ENCODE measurements at regions of chr17 and their contacts with region 1.

Region 1: GRCh38 chr17:73645050-73645978 is 1.1 kb upstream of the SDK2 start:
- DNase-seq: no peak
- H3K4me3 ChIP-seq: peak overlapping the region; percentile 61 to 76
- H3K27ac ChIP-seq: peak overlapping the region in 1 of 2 donors; percentile 66
- H3K4me1 ChIP-seq: peaks cover 6 to 18% of the 10 kb centered on the region in 2 donors
- H3K27me3 ChIP-seq: no peaks in the 10 kb centered on the region
- CTCF ChIP-seq: peak in 1 of 3 experiments; percentile 6

Region 2: GRCh38 chr17:73092523-73093135 is 552.7 kb before region 1 on chr17 and contains the start of gene SLC39A11:
- intact Hi-C with region 1: loop called (anchors 5 kb)
- DNase-seq: peak; percentile 80 to 95
- H3K4me3 ChIP-seq: peak within 1 kb of the TSS; percentile 77 to 86
- H3K27ac ChIP-seq: peak within 1 kb of the TSS; percentile 66 to 74
- H3K4me1 ChIP-seq: peaks cover 3 to 24% of the 10 kb centered on the region in 2 donors
- H3K27me3 ChIP-seq: no peaks in the 10 kb centered on the region
- CTCF ChIP-seq: no peak
- total RNA-seq, gene SLC39A11: 4.9 TPM

Region 3: DNA sequence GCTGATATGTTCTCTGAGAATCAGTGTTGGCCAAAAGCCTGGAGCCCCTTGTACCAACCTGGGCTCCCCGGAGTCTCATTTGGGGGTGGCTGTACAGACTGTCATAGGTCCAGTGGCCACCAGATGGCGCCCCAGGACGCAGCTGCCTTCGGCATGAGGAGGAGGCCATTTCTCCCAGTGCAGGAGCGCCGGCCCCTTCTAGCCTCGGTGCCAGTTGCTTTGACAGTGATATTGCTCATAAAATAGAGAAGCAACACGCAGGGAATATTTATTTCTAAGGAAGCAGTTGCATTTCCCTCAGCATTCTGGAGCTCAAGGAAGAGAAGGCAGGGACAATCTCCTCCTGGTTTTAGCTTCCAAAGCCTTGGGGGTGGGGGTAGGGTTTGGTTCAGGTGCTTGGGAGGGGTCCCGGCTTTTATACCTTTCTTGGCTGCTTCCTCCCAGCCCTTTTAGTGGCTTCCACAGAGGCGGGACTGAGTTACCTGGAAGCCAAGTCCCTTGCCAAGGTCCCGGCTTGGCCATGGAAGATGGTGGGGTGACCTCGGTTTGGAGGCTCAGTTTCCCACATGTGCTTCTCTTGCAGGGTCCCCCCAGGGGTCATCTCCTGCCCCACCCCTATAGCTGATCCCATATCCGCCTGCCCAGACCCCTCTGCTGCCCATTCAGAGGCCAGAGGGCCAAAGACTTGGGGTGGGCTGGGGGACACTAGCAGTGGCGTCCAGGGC is 215.7 kb before region 1 on chr17:
- intact Hi-C with region 1: loop called (anchors 5 kb)
- DNase-seq: peak; percentile 26 to 87
- H3K4me3 ChIP-seq: no peak overlapping the region
- H3K27ac ChIP-seq: no peak overlapping the region
- H3K4me1 ChIP-seq: no peaks in the 10 kb centered on the region
- H3K27me3 ChIP-seq: no peaks in the 10 kb centered on the region
- CTCF ChIP-seq: peak; percentile 81 to 98 (median 95)

Region 4: GRCh38 chr17:73690676-73691075 is 45.4 kb after region 1 on chr17:
- intact Hi-C with region 1: no loop called
- DNase-seq: no peak
- H3K4me3 ChIP-seq: no peak overlapping the region
- H3K27ac ChIP-seq: no peak overlapping the region
- H3K4me1 ChIP-seq: no peaks in the 10 kb centered on the region
- H3K27me3 ChIP-seq: no peaks in the 10 kb centered on the region
- CTCF ChIP-seq: no peak

Region 5: GRCh38 chr17:73710095-73710592 is 64.8 kb after region 1 on chr17:
- intact Hi-C with region 1: loop called (anchors 5 kb)
- DNase-seq: peak in 1 of 2 donors; percentile 77
- H3K4me3 ChIP-seq: no peak overlapping the region
- H3K27ac ChIP-seq: no peak overlapping the region
- H3K4me1 ChIP-seq: peaks cover 0 to 2% of the 10 kb centered on the region in 2 donors
- H3K27me3 ChIP-seq: no peaks in the 10 kb centered on the region
- CTCF ChIP-seq: peak; percentile 72 to 82 (median 78)

Region 6: GRCh38 chr17:73770115-73770848 is 125.0 kb after region 1 on chr17:
- intact Hi-C with region 1: loop called (anchors 2 kb)
- DNase-seq: peak; percentile 53 to 92
- H3K4me3 ChIP-seq: peak overlapping the region in 1 of 2 donors; percentile 3
- H3K27ac ChIP-seq: peak overlapping the region; percentile 53 to 54
- H3K4me1 ChIP-seq: peaks cover 13 to 27% of the 10 kb centered on the region in 2 donors
- H3K27me3 ChIP-seq: no peaks in the 10 kb centered on the region
- CTCF ChIP-seq: no peak

Region 7: GRCh38 chr17:74203439-74204240 is 558.3 kb after region 1 on chr17 and contains the start of gene RPL38:
- intact Hi-C with region 1: loop called (anchors 5 kb)
- DNase-seq: peak; percentile 74 to 97
- H3K4me3 ChIP-seq: peak within 1 kb of the TSS; percentile 68 to 93
- H3K27ac ChIP-seq: peak within 1 kb of the TSS; percentile 76
- H3K4me1 ChIP-seq: peaks cover 9 to 15% of the 10 kb centered on the region in 2 donors
- H3K27me3 ChIP-seq: peaks cover 4% of the 10 kb centered on the region
- CTCF ChIP-seq: peak; percentile 88 to 96 (median 93)
- total RNA-seq, gene RPL38: 243 TPM

Region 8: DNA sequence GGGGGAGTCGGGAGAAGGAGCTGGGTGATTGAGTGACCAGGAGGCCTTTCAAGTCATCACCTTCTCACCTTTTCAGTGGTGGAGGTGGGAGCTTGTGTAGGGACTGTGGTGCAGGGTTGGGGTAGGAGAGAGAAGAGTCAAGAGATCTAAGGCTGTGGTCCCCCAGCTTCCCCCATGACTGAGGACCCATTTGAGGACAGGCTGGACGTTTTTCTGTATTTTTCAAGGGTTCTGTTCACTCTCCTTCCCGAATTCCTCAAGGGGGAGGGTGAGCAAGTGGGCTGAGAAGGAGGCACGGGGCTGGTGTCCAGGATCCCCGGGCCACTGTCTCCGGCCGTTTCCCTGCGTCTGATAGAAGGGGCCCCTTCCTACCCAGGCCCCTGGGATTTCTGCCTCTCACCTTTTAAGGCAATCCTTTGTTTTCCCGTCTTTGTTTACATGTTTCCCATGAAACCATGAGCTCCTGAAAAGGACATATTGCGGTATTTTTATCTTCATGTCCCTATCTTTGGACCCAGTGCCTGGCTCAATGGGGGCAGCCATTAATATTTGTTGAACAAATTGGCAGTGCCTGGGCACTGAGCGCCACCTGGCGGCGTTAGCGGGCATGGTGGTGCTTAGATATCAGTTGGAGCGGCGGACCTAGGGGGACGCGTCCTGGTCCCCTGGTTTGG is 812.0 kb after region 1 on chr17:
- intact Hi-C with region 1: loop called (anchors 10 kb)
- DNase-seq: peak in 1 of 2 donors; percentile 90
- H3K4me3 ChIP-seq: no peak overlapping the region
- H3K27ac ChIP-seq: no peak overlapping the region
- H3K4me1 ChIP-seq: peaks cover 19 to 22% of the 10 kb centered on the region in 2 donors
- H3K27me3 ChIP-seq: no peaks in the 10 kb centered on the region
- CTCF ChIP-seq: peak; percentile 97 to 99 (median 99)